CD8-positive, alpha-beta T cell (primary cell): ENCODE measurements at regions of chr4 and their contacts with region 1.

Region 1: DNA sequence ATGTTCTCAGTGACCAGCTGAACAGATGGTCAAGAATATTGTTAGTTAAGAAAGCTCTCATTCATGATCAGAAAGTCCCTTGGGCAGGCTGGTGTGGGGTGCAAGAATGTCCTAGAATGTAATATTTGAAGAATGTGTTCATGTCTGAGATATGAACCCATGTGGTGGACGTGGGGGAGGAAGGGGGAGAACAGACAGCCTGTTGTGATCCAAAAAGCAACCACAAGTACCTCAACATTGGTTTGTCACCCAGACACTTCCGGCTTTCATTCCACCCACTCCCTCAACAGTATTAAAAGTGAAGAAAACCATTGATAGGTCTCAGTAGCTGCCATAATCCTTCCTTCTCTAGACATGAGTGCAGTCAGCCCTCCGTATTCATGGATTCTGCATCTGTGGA is 82.2 kb downstream of the MAML3 start:
- DNase-seq: peak; percentile 27 to 88 (median 62)
- ATAC-seq: peak; percentile 88
- H3K4me3 ChIP-seq: no peak overlapping the region
- H3K4me3 Mint-ChIP-seq: peak overlapping the region; percentile 74
- H3K27ac ChIP-seq: no peak overlapping the region
- H3K27ac Mint-ChIP-seq: peak overlapping the region; percentile 90
- H3K4me1 ChIP-seq: peaks cover 28% of the 10 kb centered on the region
- H3K4me1 Mint-ChIP-seq: peaks cover 48% of the 10 kb centered on the region
- H3K27me3 ChIP-seq: peaks cover 0 to 2% of the 10 kb centered on the region in 2 experiments
- H3K27me3 Mint-ChIP-seq: no peaks in the 10 kb centered on the region
- CTCF ChIP-seq: no peak

Region 2: GRCh38 chr4:140095694-140096482 is 24.1 kb after region 1 on chr4:
- CTCF ChIA-PET with region 1: interaction called, 3 read pairs
- POLR2A ChIA-PET with region 1: interaction called, 4 read pairs
- intact Hi-C with region 1: loop called (anchors 2 kb)
- DNase-seq: peak in 7 of 9 experiments; percentile 8 to 89 (median 68)
- ATAC-seq: peak; percentile 74
- H3K4me3 ChIP-seq: peak overlapping the region; percentile 7 to 19
- H3K4me3 Mint-ChIP-seq: peak overlapping the region; percentile 76
- H3K27ac ChIP-seq: peak overlapping the region; percentile 51 to 65
- H3K27ac Mint-ChIP-seq: peak overlapping the region; percentile 93
- H3K4me1 ChIP-seq: peaks cover 55% of the 10 kb centered on the region
- H3K4me1 Mint-ChIP-seq: peaks cover 76% of the 10 kb centered on the region
- H3K27me3 ChIP-seq: no peaks in the 10 kb centered on the region
- H3K27me3 Mint-ChIP-seq: no peaks in the 10 kb centered on the region
- CTCF ChIP-seq: no peak

Region 3: DNA sequence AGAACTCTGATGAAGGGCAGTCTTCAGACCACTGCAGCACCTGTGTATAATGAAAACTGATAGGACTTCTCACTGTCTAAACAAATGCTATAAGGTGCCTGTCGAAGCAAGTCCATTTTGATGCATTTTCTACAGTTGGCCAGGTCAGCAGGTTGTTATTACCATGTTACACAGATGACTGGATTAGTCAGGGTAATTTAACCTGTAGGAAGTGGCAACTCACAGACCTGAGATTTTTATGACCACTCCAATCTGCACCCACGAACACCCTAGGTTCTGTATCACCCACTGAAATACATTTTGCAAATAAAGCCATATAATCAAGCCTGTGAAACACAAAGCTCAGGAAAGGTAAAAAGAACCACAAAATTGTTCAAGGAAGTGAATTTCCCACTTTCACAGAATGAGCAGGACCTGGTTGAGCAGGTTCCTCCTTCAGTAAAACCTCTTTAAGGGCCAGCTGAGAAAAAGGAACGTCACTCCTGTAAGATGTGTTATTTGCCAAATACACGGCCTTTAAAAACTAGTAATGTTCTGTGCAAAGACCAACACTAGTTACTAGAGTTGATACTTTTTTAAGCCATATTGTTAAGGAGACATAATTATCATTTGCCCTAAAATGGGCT is 69.5 kb after region 1 on chr4:
- CTCF ChIA-PET with region 1: no interaction called
- POLR2A ChIA-PET with region 1: no interaction called
- intact Hi-C with region 1: no loop called
- DNase-seq: no peak
- ATAC-seq: no peak
- H3K4me3 ChIP-seq: no peak overlapping the region
- H3K4me3 Mint-ChIP-seq: no peak overlapping the region
- H3K27ac ChIP-seq: no peak overlapping the region
- H3K27ac Mint-ChIP-seq: no peak overlapping the region
- H3K4me1 ChIP-seq: no peaks in the 10 kb centered on the region
- H3K4me1 Mint-ChIP-seq: peaks cover 18% of the 10 kb centered on the region
- H3K27me3 ChIP-seq: no peaks in the 10 kb centered on the region
- H3K27me3 Mint-ChIP-seq: no peaks in the 10 kb centered on the region
- CTCF ChIP-seq: no peak